AG04450 (cell line): ENCODE measurements at regions of chr7 and their contacts with region 1.

Region 1: GRCh38 chr7:143240291-143241168 is 18.7 kb downstream of the TAS2R40 start:
- DNase-seq: peak; percentile 68
- H3K4me3 ChIP-seq: no peak overlapping the region
- H3K27ac ChIP-seq: no peak overlapping the region
- H3K27me3 ChIP-seq: no peaks in the 10 kb centered on the region
- CTCF ChIP-seq: peak; percentile 97

Region 2: DNA sequence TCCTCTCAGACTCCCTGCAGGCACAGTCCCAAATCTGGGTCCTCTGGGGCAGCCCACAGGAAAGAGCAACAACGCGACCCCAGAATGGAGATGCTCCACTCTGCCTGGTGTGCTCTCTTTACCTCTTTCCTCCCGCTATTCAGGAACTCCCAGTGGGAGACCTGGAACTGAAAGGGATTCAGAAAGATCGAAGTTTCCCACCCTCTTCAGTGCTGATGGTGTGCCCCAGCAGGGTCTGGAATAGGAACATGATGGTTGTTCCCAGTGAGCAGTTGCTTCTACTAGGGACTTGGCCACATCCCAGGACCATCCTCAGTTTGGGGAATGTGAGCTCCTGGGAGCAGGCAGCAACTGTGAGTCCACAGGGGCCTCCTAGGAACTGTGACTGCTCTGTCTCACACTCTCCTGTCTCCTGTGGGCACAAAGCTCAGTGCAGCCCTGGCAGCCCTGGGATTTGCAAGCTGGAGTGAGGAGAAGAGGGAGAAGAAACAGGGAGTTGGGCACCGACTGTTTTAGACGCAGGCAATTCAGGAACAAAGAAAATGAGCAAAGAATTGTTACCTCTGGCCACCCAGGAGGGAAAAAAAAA is 170.5 kb before region 1 on chr7:
- CTCF ChIA-PET with region 1: no interaction called
- POLR2A ChIA-PET with region 1: no interaction called
- DNase-seq: no peak
- H3K4me3 ChIP-seq: no peak overlapping the region
- H3K27ac ChIP-seq: no peak overlapping the region
- H3K27me3 ChIP-seq: no peaks in the 10 kb centered on the region
- CTCF ChIP-seq: no peak

Region 3: DNA sequence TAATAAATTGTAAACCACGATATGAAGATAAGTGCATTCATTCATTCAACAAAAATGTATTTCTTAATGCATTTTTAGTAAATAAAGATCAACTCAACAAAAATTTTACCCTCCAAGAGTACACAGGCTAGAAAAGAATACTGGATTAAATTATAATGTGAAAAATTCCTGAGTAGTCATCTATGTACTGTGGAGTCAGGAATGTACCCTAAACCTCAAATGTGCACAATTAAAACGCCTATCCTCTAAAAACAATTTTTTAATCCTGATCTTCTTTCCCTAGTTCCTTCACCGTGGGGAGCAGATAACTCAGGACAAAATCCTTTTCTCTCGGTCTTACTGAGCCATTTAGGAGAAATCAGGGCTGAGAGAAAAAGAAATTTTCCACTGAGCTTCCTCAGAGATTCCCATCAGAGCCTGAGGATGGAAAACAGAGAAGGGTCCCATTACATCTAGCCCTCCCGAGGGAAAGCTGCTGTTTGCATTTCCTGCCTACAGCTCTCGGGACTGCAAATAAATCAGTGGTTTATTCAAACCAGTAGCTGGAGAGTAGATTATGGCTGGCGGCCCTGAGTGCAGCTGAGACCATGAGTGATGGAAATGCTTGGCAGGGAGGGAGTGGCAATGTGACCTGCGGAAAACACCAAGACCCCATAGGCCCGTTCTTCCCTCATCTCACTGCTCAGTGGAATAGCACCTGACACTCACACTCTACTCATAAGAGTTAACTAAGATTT is 11.3 kb before region 1 on chr7:
- CTCF ChIA-PET with region 1: interaction called, 28 read pairs
- POLR2A ChIA-PET with region 1: no interaction called
- DNase-seq: no peak
- H3K4me3 ChIP-seq: no peak overlapping the region
- H3K27ac ChIP-seq: no peak overlapping the region
- H3K27me3 ChIP-seq: peaks cover 2% of the 10 kb centered on the region
- CTCF ChIP-seq: no peak

Region 4: GRCh38 chr7:143287935-143288826 is 47.7 kb after region 1 on chr7 and contains the start of gene CASP2:
- CTCF ChIA-PET with region 1: interaction called, 10 read pairs
- POLR2A ChIA-PET with region 1: interaction called, 3 read pairs
- DNase-seq: peak; percentile 91
- H3K4me3 ChIP-seq: peak within 1 kb of the TSS; percentile 79
- H3K27ac ChIP-seq: peak within 1 kb of the TSS; percentile 61
- H3K27me3 ChIP-seq: no peaks in the 10 kb centered on the region
- CTCF ChIP-seq: peak; percentile 44
- polyA plus RNA-seq, gene CASP2: 18.6 and 21.8 TPM in 2 replicates

Region 5: DNA sequence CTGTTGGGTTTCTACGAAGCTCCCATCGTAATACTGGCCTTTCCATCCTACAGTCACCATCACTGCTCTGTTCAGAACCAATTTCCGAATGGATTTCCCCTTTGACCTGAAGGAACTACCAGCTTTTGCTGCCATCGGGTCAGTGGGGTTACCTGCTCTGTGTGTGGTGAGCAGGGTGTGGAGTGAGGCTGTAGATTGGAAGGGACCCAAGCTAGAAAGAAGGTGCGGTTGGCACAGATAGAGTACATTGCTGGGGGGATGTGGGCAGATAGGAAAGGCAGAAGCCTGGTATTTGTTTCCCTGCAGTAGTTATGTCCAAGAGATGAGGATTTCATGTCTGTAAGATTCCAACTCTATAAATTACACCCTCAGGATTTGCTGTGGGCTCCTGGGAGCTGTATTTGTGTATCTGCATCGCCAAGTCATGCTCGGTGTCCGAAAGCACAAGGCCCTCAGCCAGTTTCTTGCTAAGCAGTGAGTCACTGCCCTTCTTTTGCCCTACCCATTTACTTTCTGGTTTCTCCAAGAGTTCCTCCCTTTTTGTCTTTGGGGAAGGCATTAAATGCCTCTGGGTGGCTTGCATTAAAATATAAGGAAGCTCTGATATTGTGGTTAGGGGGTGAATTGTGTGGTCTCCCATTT is 90.8 kb after region 1 on chr7:
- CTCF ChIA-PET with region 1: interaction called, 13 read pairs
- POLR2A ChIA-PET with region 1: no interaction called
- DNase-seq: peak; percentile 77
- H3K4me3 ChIP-seq: no peak overlapping the region
- H3K27ac ChIP-seq: peak overlapping the region; percentile 66
- H3K27me3 ChIP-seq: no peaks in the 10 kb centered on the region
- CTCF ChIP-seq: no peak

Region 6: DNA sequence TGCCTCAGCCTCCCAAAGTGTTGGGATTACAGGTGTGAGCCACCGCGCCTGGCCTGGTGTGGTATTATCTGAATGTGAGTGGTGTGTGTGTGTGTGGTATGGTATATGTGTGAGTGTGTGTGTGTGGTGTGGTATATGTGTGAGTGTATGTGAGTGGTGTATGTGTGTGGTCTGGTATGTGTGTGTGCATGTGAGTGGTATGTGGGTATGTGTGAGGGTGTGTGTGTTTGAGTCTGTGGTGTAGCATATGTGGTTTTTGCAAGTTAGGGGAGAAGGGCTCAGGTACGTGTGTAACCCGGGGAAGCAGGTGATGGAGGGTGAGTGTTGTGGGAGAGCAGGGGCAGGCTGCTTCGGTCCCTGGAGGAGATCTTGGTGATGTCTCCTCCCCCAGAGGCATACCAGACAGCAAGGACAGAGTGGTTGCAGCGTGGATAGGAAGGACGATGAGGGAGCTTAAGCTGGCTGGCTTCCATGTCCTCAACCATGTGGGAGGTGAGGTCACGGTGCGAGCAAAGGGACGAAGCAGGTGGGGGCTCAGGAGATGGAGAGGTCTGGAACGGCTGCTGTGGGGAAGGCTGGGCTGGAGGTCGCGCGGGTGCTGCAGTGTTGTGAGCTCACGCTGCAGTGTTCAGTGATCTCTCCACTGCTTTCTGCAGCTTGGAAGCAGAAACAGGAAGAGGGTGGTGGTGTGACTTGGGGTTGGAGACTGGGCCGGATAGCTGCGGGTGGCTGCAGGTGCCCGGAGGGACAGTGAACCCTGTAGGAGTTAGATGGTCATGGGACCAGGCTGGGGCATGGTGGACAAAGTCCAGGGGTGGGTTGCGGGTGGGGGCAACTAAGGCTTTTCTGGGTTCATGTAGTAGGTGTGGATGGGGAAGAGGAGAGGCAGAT is 145.6 kb after region 1 on chr7:
- CTCF ChIA-PET with region 1: interaction called, 10 read pairs
- POLR2A ChIA-PET with region 1: interaction called, 6 read pairs
- DNase-seq: no peak
- H3K4me3 ChIP-seq: peak overlapping the region; percentile 45
- H3K27ac ChIP-seq: no peak overlapping the region
- H3K27me3 ChIP-seq: no peaks in the 10 kb centered on the region
- CTCF ChIP-seq: no peak

Region 7: DNA sequence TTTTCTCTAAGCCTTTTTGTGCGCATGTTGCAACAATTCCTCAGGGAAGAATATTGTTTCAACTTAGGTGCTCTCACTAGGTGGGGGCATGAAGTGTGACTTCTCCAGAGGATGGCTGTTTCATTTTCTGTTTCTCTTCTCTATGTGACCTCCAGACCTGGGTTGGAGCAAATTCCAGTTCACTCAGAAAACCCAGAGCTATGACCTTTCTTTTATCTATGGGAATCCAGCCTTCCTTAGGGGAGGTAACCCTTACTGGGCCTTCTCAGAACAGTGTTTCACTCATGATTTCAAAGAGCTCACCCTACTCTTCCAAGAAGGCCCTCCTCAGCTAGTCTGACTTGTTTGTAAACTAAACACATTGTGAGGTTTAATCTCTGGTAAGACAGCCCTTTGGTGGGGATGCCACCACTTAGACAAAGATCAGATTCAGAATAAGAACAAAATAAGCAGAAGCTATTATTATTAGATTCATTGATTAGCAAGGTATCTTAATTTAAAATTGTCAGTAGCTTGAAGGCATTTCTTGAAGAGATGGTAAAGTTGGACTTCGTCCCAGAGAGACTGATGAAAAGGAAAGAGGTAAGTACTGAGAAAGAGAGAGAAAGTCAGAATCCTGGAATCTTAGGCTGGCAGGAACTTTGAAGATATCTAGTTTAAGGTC is 186.1 kb after region 1 on chr7:
- CTCF ChIA-PET with region 1: interaction called, 21 read pairs
- POLR2A ChIA-PET with region 1: no interaction called
- DNase-seq: no peak
- H3K4me3 ChIP-seq: no peak overlapping the region
- H3K27ac ChIP-seq: no peak overlapping the region
- H3K27me3 ChIP-seq: no peaks in the 10 kb centered on the region
- CTCF ChIP-seq: no peak